ENCODE measurements at regions of chr22 and their contacts with region 1.

Region 1: GRCh38 chr22:28009272-28009827 is 90.3 kb upstream of the PITPNB start:
- DNase-seq: peak; percentile 84
- H3K4me3 Mint-ChIP-seq: no peak overlapping the region
- H3K27ac Mint-ChIP-seq: no peak overlapping the region
- H3K4me1 Mint-ChIP-seq: no peaks in the 10 kb centered on the region
- H3K27me3 Mint-ChIP-seq: peaks cover 7% of the 10 kb centered on the region

Region 2: GRCh38 chr22:27857443-27857842 is 151.9 kb before region 1 on chr22:
- CTCF ChIA-PET with region 1: no interaction called
- DNase-seq: no peak
- H3K4me3 Mint-ChIP-seq: no peak overlapping the region
- H3K27ac Mint-ChIP-seq: no peak overlapping the region
- H3K4me1 Mint-ChIP-seq: no peaks in the 10 kb centered on the region
- H3K27me3 Mint-ChIP-seq: no peaks in the 10 kb centered on the region

Region 3: DNA sequence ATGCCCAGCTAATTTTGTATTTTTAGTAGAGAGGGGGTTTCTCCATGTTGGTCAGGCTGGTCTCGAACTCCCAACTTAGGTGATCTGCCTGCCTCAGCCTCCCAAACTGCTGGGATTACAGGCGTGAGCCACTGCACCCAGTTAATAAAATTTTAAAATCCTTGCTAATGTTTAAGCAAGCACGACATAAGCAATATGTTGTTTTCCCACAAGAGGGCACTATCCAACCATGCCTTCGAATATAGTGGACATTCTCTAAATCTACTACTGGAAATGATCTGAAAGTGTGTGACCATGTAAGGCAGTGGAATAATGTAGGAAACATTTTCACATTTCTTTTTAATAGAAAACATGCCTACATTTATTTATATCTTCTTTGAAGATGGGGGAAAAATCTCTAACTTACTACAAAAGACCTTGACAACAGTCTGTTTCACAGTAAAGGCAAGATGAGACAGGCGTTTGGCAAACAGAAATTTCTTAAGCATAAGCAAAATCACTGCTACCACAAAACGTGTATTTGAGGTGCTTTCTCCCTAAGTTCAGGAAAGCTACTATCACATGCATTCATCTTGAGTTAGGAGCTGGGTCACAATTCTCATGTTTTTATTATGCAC is 128.5 kb before region 1 on chr22:
- CTCF ChIA-PET with region 1: interaction called, 29 read pairs
- DNase-seq: peak; percentile 38
- H3K4me3 Mint-ChIP-seq: no peak overlapping the region
- H3K27ac Mint-ChIP-seq: no peak overlapping the region
- H3K4me1 Mint-ChIP-seq: peaks cover 22% of the 10 kb centered on the region
- H3K27me3 Mint-ChIP-seq: no peaks in the 10 kb centered on the region

Region 4: DNA sequence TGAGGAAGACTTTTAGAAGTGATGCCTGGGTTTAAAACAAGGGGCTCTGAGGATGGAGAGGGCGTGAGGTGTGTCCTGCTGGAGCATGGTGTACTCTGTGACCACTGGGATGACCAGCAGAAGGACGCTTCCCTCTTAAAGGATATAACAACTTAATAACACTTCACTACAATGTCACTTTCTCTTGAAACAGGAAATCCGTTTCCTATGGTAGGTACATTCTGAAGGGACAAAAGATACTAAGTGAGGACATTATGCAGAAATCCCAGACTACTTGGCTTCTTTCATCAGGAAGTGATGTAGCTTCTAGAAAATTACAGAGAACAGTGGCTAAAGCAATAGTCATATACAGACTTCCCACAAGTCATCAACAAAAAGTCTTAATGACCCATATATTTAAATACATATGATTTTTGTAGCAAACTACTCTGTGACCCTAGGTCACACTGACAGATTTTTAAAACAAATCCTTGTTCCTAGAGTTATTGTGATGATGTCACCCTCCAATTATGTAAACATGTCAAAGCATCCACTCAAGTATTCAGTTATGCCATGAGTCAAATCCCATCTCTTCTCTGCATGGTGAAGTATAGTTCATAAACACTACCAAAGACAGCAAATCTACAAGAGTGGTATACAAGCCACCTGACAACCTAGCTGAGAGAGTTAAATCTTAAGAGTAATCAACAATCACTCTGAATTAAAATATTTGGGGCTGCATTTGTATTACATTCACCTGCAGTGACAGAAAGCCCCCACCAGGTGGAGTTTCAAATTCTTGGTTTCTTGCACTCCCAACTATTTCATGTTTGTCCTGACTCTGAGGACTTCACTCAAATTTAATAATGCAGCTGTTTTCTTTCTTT is 123.1 kb before region 1 on chr22:
- CTCF ChIA-PET with region 1: interaction called, 29 read pairs
- DNase-seq: peak; percentile 59
- H3K4me3 Mint-ChIP-seq: no peak overlapping the region
- H3K27ac Mint-ChIP-seq: peak overlapping the region; percentile 43
- H3K4me1 Mint-ChIP-seq: peaks cover 2% of the 10 kb centered on the region
- H3K27me3 Mint-ChIP-seq: no peaks in the 10 kb centered on the region

Region 5: GRCh38 chr22:27980424-27981148 is 28.8 kb before region 1 on chr22:
- CTCF ChIA-PET with region 1: no interaction called
- DNase-seq: no peak
- H3K4me3 Mint-ChIP-seq: no peak overlapping the region
- H3K27ac Mint-ChIP-seq: no peak overlapping the region
- H3K4me1 Mint-ChIP-seq: no peaks in the 10 kb centered on the region
- H3K27me3 Mint-ChIP-seq: no peaks in the 10 kb centered on the region

Measured in activated naive CD4-positive, alpha-beta T cell treated with anti-CD3 and anti-CD28 coated beads, Interleukin-2, amount 10 ng/mL, durations not matched to agents 7 days and 5 days (primary cell).